Panc1 (cell line): ENCODE measurements at regions of chr4 and their contacts with region 1.

Region 1: DNA sequence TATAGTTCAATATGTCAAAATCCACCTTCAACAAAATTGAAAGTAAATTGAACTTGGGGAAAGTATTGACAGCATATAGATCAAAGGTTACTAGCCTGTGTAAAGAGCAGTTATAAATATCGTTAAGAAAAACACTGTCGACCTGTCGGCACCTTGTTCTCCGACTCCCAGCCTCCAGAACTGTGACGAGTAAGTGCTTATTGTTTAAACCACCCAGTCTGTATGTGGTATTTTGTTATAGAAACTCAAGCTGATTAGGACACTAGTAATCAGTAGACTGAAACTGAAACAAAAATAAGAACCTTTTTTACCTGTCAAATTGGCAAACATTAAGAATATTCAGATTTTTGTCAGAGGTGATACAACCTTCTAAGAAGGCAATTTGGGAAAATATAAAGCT is 17.0 kb downstream of the HTT start:
- DNase-seq: no peak
- ATAC-seq: no peak
- H3K4me3 ChIP-seq: no peak overlapping the region
- H3K27ac ChIP-seq: no peak overlapping the region
- H3K4me1 ChIP-seq: no peaks in the 10 kb centered on the region
- H3K27me3 ChIP-seq: no peaks in the 10 kb centered on the region
- CTCF ChIP-seq: no peak

Region 2: DNA sequence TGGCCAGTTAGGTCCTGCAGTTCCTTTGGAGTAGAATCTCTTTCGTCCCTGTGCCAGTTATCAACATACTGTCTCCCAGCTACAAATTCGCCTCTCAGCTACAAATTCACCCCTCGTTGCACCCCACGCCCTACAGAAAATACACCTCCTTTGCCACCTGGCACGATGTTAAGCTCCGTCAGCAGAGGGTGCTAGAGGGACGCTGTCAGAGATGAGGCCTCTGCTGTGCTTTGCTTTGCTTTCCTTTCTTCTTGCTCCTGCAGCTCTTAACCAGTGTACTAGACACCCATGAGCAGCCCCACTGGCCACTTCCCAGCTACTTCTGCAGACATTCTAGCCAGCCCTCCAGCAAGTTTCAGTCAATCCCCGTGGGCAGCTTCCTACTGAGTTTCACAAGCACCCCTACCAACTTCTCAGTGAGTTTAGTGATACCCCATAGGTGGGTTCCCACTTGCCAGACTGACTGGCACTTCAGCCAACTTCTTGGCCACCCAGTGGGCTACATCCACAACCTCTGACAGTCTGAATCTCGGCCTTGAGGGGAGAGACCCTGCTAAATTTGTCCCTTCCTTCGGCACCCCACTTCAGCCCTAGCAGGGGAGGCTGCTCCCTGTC is 871.3 kb before region 1 on chr4:
- CTCF ChIA-PET with region 1: interaction called, 10 read pairs
- POLR2A ChIA-PET with region 1: no interaction called
- in situ Hi-C with region 1: no loop called
- intact Hi-C with region 1: no loop called
- DNase-seq: peak; percentile 61
- ATAC-seq: peak; percentile 90
- H3K4me3 ChIP-seq: no peak overlapping the region
- H3K27ac ChIP-seq: no peak overlapping the region
- H3K4me1 ChIP-seq: no peaks in the 10 kb centered on the region; the same call in 1 of the 2 replicates
- H3K27me3 ChIP-seq: no peaks in the 10 kb centered on the region
- CTCF ChIP-seq: peak; percentile 87

Region 3: GRCh38 chr4:3660086-3660927 is 568.8 kb after region 1 on chr4:
- CTCF ChIA-PET with region 1: no interaction called
- POLR2A ChIA-PET with region 1: interaction called, 10 read pairs
- in situ Hi-C with region 1: no loop called
- intact Hi-C with region 1: no loop called
- DNase-seq: no peak
- ATAC-seq: no peak
- H3K4me3 ChIP-seq: no peak overlapping the region
- H3K27ac ChIP-seq: no peak overlapping the region
- H3K4me1 ChIP-seq: no peaks in the 10 kb centered on the region; the same call in 1 of the 2 replicates
- H3K27me3 ChIP-seq: no peaks in the 10 kb centered on the region; the same call in 1 of the 2 replicates
- CTCF ChIP-seq: no peak